Endothelial cell of umbilical vein (primary cell): ENCODE measurements at regions of chr5 and their contacts with region 1.

Region 1: GRCh38 chr5:177133091-177133852 is at the start of gene NSD1:
- DNase-seq: peak; percentile 75
- H3K4me3 ChIP-seq: peak within 1 kb of the TSS; percentile 25 to 81 (median 66)
- H3K27ac ChIP-seq: peak within 1 kb of the TSS; percentile 30
- H3K4me1 ChIP-seq: peaks cover 43% of the 10 kb centered on the region
- H3K27me3 ChIP-seq: no peaks in the 10 kb centered on the region
- CTCF ChIP-seq: no peak
- POLR2A ChIP-seq: peak; percentile 78
- total RNA-seq, gene NSD1: 76.1 and 90.4 TPM in 2 replicates

Region 2: GRCh38 chr5:177049285-177049684 is 84.0 kb before region 1 on chr5:
- CTCF ChIA-PET with region 1: no interaction called
- POLR2A ChIA-PET with region 1: no interaction called
- dilution Hi-C with region 1: no loop called
- intact Hi-C with region 1: no loop called
- DNase-seq: no peak
- H3K4me3 ChIP-seq: no peak overlapping the region
- H3K27ac ChIP-seq: no peak overlapping the region
- H3K4me1 ChIP-seq: peaks cover under 1% of the 10 kb centered on the region
- H3K27me3 ChIP-seq: no peaks in the 10 kb centered on the region
- CTCF ChIP-seq: no peak
- POLR2A ChIP-seq: no peak

Region 3: DNA sequence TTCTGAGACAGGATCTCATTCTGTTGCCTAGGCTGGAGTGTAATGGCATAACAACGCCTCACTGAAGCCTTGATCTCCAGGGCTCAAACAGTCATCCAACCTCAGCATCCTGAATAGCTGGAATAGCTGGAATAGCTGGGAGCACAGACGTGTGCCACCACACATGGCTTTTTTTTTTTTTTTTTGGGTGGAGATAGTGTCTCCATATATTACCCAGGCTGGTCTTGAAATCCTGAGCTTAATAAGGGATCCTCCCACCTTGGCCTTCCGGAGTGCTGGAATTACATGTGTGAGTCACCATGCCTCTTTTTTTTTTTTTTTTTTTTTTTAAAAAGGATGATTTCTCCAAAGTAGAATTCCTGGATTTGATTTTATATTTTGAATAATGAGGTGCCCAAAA is 61.0 kb after region 1 on chr5:
- CTCF ChIA-PET with region 1: no interaction called
- POLR2A ChIA-PET with region 1: interaction called, 4 read pairs
- dilution Hi-C with region 1: no loop called
- intact Hi-C with region 1: loop called (anchors 2 kb)
- DNase-seq: peak; percentile 79
- H3K4me3 ChIP-seq: no peak overlapping the region
- H3K27ac ChIP-seq: peak overlapping the region; percentile 90
- H3K4me1 ChIP-seq: peaks cover 24% of the 10 kb centered on the region
- H3K27me3 ChIP-seq: no peaks in the 10 kb centered on the region
- CTCF ChIP-seq: no peak
- POLR2A ChIP-seq: no peak

Region 4: DNA sequence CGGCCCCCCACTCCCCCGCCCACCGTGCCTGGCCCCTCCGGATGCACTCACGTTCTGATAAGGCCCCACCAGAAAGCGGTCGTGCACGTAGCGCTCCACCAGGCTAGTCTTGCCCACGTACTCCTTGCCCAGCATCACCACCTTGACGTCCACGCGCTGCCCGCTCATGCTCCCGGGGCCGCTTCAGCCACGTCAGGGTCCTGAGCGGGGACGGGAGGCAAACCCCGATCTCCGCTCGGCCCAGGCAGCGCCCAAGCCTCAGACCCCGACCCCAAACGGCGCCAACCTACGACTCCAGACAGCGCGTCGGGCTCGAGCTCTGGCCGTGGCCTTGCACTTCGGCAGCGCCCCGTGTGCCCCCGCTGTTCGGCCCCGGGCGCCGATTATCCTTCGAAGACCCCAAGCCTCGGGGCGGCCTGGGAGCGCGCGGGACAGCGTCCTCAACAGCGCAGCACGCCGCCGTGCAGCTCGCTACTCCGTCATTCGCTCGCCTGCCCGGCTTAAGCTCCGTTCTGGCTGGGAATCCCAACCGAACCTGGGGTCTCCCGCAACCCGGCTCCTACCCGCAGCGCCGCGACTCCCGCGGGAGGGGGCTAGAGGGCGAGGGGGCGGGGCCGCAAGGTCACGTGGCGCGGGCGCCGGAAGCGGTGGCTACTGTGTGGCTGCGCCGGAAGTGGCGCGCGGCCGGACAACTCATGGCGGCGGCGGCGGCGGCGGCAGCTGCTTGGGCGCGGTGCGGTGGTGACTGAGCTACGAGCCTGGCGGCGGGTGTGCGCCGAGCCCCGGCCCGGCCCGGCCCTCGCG is 170.1 kb after region 1 on chr5 and contains the starts of genes PRELID1 and RAB24:
- CTCF ChIA-PET with region 1: no interaction called
- POLR2A ChIA-PET with region 1: no interaction called
- dilution Hi-C with region 1: no loop called
- intact Hi-C with region 1: loop called (anchors 5 kb)
- DNase-seq: peak; percentile 84
- H3K4me3 ChIP-seq: peak within 1 kb of the TSS; percentile 58 to 87 (median 80)
- H3K27ac ChIP-seq: peak within 1 kb of the TSS; percentile 65
- H3K4me1 ChIP-seq: peaks cover 35% of the 10 kb centered on the region
- H3K27me3 ChIP-seq: no peaks in the 10 kb centered on the region
- CTCF ChIP-seq: peak in 1 of 2 donors; percentile 49
- POLR2A ChIP-seq: peak; percentile 45
- total RNA-seq, gene PRELID1: 201 and 203 TPM in 2 replicates
- total RNA-seq, gene RAB24: 20.6 and 20.7 TPM in 2 replicates

Region 5: GRCh38 chr5:177489119-177489716 is 355.9 kb after region 1 on chr5:
- CTCF ChIA-PET with region 1: no interaction called
- POLR2A ChIA-PET with region 1: no interaction called
- dilution Hi-C with region 1: no loop called
- intact Hi-C with region 1: no loop called
- DNase-seq: no peak
- H3K4me3 ChIP-seq: no peak overlapping the region
- H3K27ac ChIP-seq: no peak overlapping the region
- H3K4me1 ChIP-seq: peaks cover 33% of the 10 kb centered on the region
- H3K27me3 ChIP-seq: no peaks in the 10 kb centered on the region
- CTCF ChIP-seq: peak in 1 of 2 donors; percentile 38
- POLR2A ChIP-seq: no peak